ENCODE measurements at regions of chr15 and their contacts with region 1.

Region 1: GRCh38 chr15:71443538-71443937 is 328.3 kb downstream of the THSD4 start:
- DNase-seq: peak; percentile 62
- ATAC-seq: peak; percentile 58 to 60
- H3K4me3 ChIP-seq: no peak overlapping the region
- H3K27ac ChIP-seq: no peak overlapping the region
- H3K4me1 ChIP-seq: peaks cover 33% of the 10 kb centered on the region
- H3K27me3 ChIP-seq: no peaks in the 10 kb centered on the region
- CTCF ChIP-seq: peak; percentile 88

Region 2: DNA sequence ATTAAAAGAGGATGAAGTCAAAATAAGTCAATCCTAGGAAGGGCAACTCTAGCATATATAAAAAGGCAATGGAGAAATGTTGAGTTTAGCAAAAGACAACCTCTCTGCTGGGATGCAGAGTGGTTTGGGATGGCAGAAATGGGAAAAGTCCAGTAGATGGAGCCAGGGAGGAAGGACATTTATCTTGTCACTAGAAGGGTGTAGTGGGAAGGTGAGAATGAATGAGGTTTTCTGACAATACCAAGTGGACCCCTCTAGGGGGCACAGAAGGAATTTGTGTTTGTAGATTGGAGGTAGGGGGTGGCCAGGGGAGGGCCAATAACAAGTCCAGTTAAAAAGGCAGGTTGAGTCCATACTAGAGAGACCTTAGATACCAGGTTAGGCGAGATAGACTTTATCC is 248.3 kb before region 1 on chr15:
- intact Hi-C with region 1: no loop called
- DNase-seq: no peak
- ATAC-seq: no peak
- H3K4me3 ChIP-seq: no peak overlapping the region
- H3K27ac ChIP-seq: no peak overlapping the region
- H3K4me1 ChIP-seq: no peaks in the 10 kb centered on the region
- H3K27me3 ChIP-seq: no peaks in the 10 kb centered on the region
- CTCF ChIP-seq: no peak

Region 3: GRCh38 chr15:71386448-71387236 is 56.9 kb before region 1 on chr15:
- intact Hi-C with region 1: loop called (anchors 5 kb)
- DNase-seq: no peak
- ATAC-seq: peak in 1 of 2 donors; percentile 77
- H3K4me3 ChIP-seq: no peak overlapping the region
- H3K27ac ChIP-seq: peak overlapping the region; percentile 25
- H3K4me1 ChIP-seq: peaks cover 40% of the 10 kb centered on the region
- H3K27me3 ChIP-seq: no peaks in the 10 kb centered on the region
- CTCF ChIP-seq: peak; percentile 64

Region 4: GRCh38 chr15:71532994-71533393 is 89.5 kb after region 1 on chr15:
- intact Hi-C with region 1: no loop called
- DNase-seq: no peak
- ATAC-seq: peak in 1 of 2 donors; percentile 70
- H3K4me3 ChIP-seq: no peak overlapping the region
- H3K27ac ChIP-seq: no peak overlapping the region
- H3K4me1 ChIP-seq: no peaks in the 10 kb centered on the region
- H3K27me3 ChIP-seq: no peaks in the 10 kb centered on the region
- CTCF ChIP-seq: peak; percentile 63

Region 5: DNA sequence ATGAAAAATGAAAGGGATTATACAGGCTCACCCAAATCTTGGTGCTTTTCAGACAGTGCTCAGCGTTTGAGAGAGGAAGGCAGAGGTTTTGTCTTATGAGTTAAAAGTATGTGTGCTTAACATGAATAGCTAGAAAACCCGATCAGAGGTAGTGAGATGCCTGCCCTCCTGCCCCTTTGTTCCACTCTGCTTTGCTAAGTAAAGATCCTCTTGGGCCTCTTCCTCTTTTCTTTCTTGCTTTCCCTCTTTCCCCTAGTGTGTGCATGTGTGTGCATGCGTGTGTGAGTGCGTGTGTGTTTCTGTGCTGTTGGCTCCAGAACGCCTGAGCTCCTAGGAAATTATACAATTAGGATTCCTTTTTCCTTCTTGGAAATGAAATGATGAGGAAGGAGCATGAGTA is 105.6 kb after region 1 on chr15:
- intact Hi-C with region 1: no loop called
- DNase-seq: no peak
- ATAC-seq: no peak
- H3K4me3 ChIP-seq: no peak overlapping the region
- H3K27ac ChIP-seq: no peak overlapping the region
- H3K4me1 ChIP-seq: no peaks in the 10 kb centered on the region
- H3K27me3 ChIP-seq: no peaks in the 10 kb centered on the region
- CTCF ChIP-seq: no peak

Region 6: GRCh38 chr15:71679223-71680053 is 235.9 kb after region 1 on chr15:
- intact Hi-C with region 1: no loop called
- DNase-seq: no peak
- ATAC-seq: peak; percentile 34 to 55
- H3K4me3 ChIP-seq: no peak overlapping the region
- H3K27ac ChIP-seq: peak overlapping the region; percentile 33
- H3K4me1 ChIP-seq: peaks cover 19% of the 10 kb centered on the region
- H3K27me3 ChIP-seq: no peaks in the 10 kb centered on the region
- CTCF ChIP-seq: no peak